ENCODE measurements at regions of chr12 and their contacts with region 1.

Region 1: GRCh38 chr12:106126441-106127337 is 12.1 kb downstream of the NUAK1 start:
- DNase-seq: peak; percentile 98
- ATAC-seq: peak; percentile 96
- H3K4me3 ChIP-seq: no peak overlapping the region
- H3K27ac ChIP-seq: peak overlapping the region; percentile 80
- H3K4me1 ChIP-seq: peaks cover 38% of the 10 kb centered on the region
- H3K27me3 ChIP-seq: no peaks in the 10 kb centered on the region
- CTCF ChIP-seq: no peak

Region 2: GRCh38 chr12:105672121-105672975 is 454.3 kb before region 1 on chr12:
- CTCF ChIA-PET with region 1: no interaction called
- POLR2A ChIA-PET with region 1: interaction called, 13 read pairs
- intact Hi-C with region 1: no loop called
- DNase-seq: no peak
- ATAC-seq: no peak
- H3K4me3 ChIP-seq: no peak overlapping the region
- H3K27ac ChIP-seq: no peak overlapping the region
- H3K4me1 ChIP-seq: no peaks in the 10 kb centered on the region
- H3K27me3 ChIP-seq: no peaks in the 10 kb centered on the region
- CTCF ChIP-seq: no peak

Region 3: DNA sequence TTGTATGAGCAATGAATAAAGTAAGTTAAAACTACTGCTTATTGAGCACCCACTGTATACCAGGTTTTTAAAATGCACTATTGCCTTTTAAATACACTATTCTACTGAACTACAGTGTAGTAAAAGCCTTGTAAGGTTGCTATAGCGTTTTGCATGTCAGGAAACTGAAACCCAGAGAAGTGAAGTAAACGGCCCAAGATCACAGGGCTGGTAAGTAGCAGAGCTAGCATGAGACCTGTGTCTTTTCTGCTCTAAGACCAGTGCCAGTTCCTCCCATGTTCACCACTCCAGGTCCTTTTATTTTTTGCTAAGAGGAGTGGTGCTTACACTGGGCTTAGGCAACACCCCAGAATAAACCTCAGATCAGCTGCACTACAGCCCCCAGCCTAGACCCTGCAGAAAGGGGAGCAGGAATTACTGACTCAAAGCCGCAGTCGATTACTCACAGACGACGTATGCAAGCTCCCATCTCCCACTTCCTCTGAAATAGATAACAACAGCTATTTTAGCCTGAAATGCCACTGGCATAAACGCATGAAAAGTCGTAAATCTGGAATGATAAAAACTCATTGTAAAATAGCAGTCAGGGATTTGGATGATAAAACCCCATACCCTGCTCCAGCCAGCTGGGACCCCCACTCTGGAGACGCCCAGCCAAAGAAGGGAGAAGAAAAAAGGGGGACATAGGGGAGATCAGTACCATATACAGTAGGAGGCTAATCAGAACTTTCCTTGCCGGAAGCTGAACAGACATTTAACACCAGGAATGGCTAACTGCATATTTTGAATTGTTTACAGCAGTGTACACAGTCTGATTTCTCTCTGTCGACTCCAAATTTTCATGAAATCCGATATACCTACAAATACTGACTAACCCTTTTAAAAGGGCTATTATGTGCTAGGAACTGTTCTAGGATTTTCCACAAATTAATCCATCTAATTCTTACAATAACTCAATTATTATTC is 96.2 kb before region 1 on chr12:
- CTCF ChIA-PET with region 1: no interaction called
- POLR2A ChIA-PET with region 1: interaction called, 4 read pairs
- intact Hi-C with region 1: loop called (anchors 2 kb)
- DNase-seq: peak; percentile 93
- ATAC-seq: peak; percentile 76
- H3K4me3 ChIP-seq: peak overlapping the region; percentile 49
- H3K27ac ChIP-seq: peak overlapping the region; percentile 87
- H3K4me1 ChIP-seq: peaks cover 43% of the 10 kb centered on the region
- H3K27me3 ChIP-seq: no peaks in the 10 kb centered on the region
- CTCF ChIP-seq: no peak

Region 4: DNA sequence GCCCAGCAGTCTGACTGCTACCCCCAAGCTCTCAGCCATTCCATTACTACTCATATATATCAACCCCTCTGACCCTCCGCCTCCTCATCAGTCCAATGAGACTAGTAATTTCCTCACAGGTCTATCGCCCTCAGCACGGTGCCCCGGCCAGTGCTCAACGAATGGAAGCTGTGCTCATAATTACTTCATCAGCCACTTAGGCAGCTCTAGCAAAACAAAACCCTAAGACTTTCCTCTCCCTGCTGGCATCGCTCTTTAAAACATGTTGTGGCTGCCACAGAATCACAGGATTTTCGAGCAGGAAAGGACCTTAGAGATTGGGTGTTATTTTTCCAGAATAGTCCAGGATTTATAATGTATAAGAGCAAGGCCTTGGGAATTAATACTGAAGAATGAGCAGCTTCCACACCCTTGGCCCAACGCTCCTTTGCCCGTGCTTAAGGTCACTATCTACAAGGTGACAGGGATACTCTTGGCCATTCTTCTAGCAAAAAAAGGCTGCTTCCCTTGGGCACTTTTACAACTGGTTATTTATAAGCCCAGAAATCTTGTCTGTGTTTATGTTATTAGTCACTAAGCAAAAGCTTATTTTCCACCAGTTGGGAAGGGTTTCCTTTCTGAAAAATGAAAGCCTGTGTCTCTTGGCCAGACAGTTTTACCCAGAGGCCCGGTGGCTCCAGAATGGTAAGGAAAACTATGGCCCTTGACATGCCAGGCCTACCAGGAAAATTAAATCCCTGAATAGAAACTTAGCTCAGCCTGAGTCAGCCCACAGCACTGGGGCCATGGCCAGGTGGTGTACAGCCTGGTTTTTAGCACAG is 35.9 kb before region 1 on chr12:
- CTCF ChIA-PET with region 1: no interaction called
- POLR2A ChIA-PET with region 1: no interaction called
- intact Hi-C with region 1: loop called (anchors 1 kb)
- DNase-seq: peak; percentile 80
- ATAC-seq: peak; percentile 75
- H3K4me3 ChIP-seq: no peak overlapping the region
- H3K27ac ChIP-seq: peak overlapping the region; percentile 63
- H3K4me1 ChIP-seq: peaks cover 38% of the 10 kb centered on the region
- H3K27me3 ChIP-seq: no peaks in the 10 kb centered on the region
- CTCF ChIP-seq: no peak

Region 5: DNA sequence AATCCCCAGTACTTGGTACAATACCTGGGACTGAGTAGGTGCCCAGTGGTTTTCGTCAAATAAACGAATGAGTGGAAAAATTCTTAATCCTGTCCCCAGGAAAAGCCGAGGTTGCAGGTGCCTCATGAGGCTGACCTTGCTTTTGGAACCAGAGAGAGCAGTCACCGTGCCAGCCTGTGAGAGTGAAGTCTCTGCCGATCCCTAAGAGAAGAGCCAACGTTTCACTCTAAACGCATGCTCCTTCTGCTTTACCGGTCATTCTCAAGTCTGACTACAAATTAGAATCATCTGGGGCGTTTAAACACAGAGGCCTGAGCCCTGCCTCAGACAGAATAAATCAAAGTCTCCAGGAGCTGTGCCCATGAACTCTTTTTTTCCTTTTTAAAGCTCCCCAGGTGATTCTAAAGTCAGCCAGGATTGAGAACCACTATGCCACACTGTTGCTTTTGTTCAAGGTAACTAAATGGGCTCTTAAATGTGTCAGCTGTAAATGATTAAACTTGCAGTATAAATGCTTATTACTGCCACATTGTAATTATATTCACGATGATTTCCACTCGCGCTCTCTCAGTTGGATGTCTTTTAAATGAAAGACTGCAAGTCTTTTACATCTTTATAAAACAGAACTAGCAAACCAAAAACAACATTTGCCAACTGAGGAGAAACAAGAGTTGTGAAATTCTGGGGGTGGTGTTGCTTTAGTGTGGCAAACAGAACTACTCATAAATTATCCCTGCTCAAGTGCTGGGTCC is 202.7 kb after region 1 on chr12:
- CTCF ChIA-PET with region 1: no interaction called
- POLR2A ChIA-PET with region 1: no interaction called
- intact Hi-C with region 1: no loop called
- DNase-seq: no peak
- ATAC-seq: no peak
- H3K4me3 ChIP-seq: no peak overlapping the region
- H3K27ac ChIP-seq: no peak overlapping the region
- H3K4me1 ChIP-seq: no peaks in the 10 kb centered on the region
- H3K27me3 ChIP-seq: no peaks in the 10 kb centered on the region
- CTCF ChIP-seq: no peak

Measured in PC-3 (cell line).